Naive thymus-derived CD4-positive, alpha-beta T cell (primary cell): ENCODE measurements at regions of chr6 and their contacts with region 1.

Region 1: GRCh38 chr6:33860706-33861474 is 57.1 kb upstream of the MLN start:
- DNase-seq: peak in 7 of 9 donors; percentile 20 to 68 (median 54)
- ATAC-seq: peak; percentile 30
- H3K4me3 ChIP-seq: no peak overlapping the region
- H3K4me3 Mint-ChIP-seq: peak overlapping the region in 9 of 10 donors; percentile 19 to 63 (median 40)
- H3K27ac ChIP-seq: no peak overlapping the region
- H3K27ac Mint-ChIP-seq: peak overlapping the region in 5 of 9 donors; percentile 12 to 82 (median 35)
- H3K4me1 ChIP-seq: peaks cover 44 to 54% of the 10 kb centered on the region in 2 donors
- H3K4me1 Mint-ChIP-seq: peaks cover 31 to 67% (median 57%) of the 10 kb centered on the region in 7 donors
- H3K27me3 ChIP-seq: no peaks in the 10 kb centered on the region
- H3K27me3 Mint-ChIP-seq: peaks cover 0 to 11% (median 9%) of the 10 kb centered on the region in 5 donors

Region 2: DNA sequence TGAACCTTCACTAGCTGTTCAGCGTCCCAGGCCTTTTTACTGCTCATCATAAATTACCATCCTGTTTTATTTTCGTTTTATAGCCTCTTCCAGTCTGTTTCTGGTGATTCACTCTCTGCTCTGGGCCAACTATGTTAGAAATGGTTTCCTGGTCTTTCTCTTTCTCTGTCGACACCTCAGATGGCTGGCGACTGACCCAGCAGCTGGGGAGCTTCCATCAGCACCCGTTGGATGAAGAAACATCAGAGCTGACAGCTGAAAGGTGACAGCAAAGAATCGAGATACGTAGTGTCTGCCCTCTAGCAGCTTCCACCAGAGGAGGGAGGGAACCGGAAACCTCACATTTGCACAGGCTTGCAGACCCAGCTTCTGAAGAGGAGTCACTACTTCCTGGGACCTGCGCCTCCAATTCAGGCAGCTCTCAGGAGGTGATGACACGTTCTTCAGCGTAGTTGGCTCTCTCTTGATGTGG is 25.8 kb after region 1 on chr6:
- CTCF ChIA-PET with region 1: no interaction called
- POLR2A ChIA-PET with region 1: no interaction called
- intact Hi-C with region 1: no loop called
- DNase-seq: peak in 4 of 9 donors; percentile 27 to 38 (median 28)
- ATAC-seq: peak; percentile 32
- H3K4me3 ChIP-seq: no peak overlapping the region
- H3K4me3 Mint-ChIP-seq: peak overlapping the region in 3 of 10 donors; percentile 9 to 42 (median 10)
- H3K27ac ChIP-seq: no peak overlapping the region
- H3K27ac Mint-ChIP-seq: peak overlapping the region; percentile 13 to 87 (median 59)
- H3K4me1 ChIP-seq: peaks cover 0 to 7% of the 10 kb centered on the region in 2 donors
- H3K4me1 Mint-ChIP-seq: peaks cover 0 to 19% (median 18%) of the 10 kb centered on the region in 7 donors
- H3K27me3 ChIP-seq: no peaks in the 10 kb centered on the region
- H3K27me3 Mint-ChIP-seq: peaks cover 0 to 42% (median 0%) of the 10 kb centered on the region in 5 donors

Region 3: GRCh38 chr6:33914645-33915044 is 53.8 kb after region 1 on chr6:
- CTCF ChIA-PET with region 1: no interaction called
- POLR2A ChIA-PET with region 1: interaction called, 4 read pairs
- intact Hi-C with region 1: loop called in 1 of 2 experiments (anchors 2 kb)
- DNase-seq: peak in 8 of 9 donors; percentile 26 to 57 (median 49)
- ATAC-seq: peak; percentile 79
- H3K4me3 ChIP-seq: peak overlapping the region; percentile 3
- H3K4me3 Mint-ChIP-seq: peak overlapping the region; percentile 61 to 84 (median 77)
- H3K27ac ChIP-seq: peak overlapping the region; percentile 5
- H3K27ac Mint-ChIP-seq: peak overlapping the region; percentile 33 to 90 (median 79)
- H3K4me1 ChIP-seq: peaks cover 32 to 41% of the 10 kb centered on the region in 2 donors
- H3K4me1 Mint-ChIP-seq: peaks cover 29 to 62% (median 54%) of the 10 kb centered on the region in 7 donors
- H3K27me3 ChIP-seq: no peaks in the 10 kb centered on the region
- H3K27me3 Mint-ChIP-seq: peaks cover 0 to 5% (median 0%) of the 10 kb centered on the region in 5 donors